BJ (cell line): ENCODE measurements at regions of chr19 and their contacts with region 1.

Region 1: DNA sequence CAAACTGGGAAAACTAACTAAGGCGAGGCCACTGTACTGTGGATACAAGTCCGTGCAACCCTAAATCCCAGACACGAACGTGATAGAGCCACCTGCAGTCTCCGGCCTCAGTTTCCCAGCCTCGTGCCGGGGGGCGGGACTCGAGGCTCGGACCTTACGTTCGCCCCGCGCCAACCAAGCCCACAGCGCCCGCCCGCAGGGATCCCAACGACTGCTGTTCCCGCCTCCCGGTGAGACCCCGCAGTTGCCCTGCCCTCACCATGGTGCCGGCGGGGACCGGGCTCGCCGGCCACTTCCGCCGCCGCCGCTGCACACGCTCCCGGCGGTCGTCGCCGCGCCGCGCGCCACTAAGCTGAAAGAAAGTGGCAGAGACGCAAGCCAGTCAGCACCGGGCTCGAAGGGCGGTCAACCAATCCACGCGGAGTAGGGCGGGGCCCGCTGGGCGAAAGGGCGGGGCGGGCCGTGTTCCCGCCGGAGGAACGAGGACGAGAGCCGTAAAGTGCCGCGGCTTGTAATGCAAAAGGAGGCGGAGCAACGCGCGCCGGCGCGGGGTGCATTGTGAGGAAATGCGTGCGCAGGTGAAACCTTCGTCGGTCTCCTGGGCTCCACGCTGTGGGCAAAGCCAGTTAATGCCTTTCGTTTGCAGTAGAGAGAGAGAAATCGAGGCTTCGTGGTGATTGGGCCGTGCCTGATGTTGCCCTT is at the start of gene LSM4:
- DNase-seq: peak; percentile 71
- H3K4me3 ChIP-seq: peak within 1 kb of the TSS; percentile 74
- H3K27me3 ChIP-seq: no peaks in the 10 kb centered on the region
- CTCF ChIP-seq: peak; percentile 22; the same call in 1 of the 2 replicates
- polyA plus RNA-seq, gene LSM4: 94.7 and 99.8 TPM in 2 replicates

Region 2: GRCh38 chr19:18233224-18233825 is 89.6 kb before region 1 on chr19:
- CTCF ChIA-PET with region 1: no interaction called
- POLR2A ChIA-PET with region 1: no interaction called
- DNase-seq: no peak
- H3K4me3 ChIP-seq: no peak overlapping the region
- H3K27me3 ChIP-seq: peaks cover 6% of the 10 kb centered on the region
- CTCF ChIP-seq: no peak

Region 3: DNA sequence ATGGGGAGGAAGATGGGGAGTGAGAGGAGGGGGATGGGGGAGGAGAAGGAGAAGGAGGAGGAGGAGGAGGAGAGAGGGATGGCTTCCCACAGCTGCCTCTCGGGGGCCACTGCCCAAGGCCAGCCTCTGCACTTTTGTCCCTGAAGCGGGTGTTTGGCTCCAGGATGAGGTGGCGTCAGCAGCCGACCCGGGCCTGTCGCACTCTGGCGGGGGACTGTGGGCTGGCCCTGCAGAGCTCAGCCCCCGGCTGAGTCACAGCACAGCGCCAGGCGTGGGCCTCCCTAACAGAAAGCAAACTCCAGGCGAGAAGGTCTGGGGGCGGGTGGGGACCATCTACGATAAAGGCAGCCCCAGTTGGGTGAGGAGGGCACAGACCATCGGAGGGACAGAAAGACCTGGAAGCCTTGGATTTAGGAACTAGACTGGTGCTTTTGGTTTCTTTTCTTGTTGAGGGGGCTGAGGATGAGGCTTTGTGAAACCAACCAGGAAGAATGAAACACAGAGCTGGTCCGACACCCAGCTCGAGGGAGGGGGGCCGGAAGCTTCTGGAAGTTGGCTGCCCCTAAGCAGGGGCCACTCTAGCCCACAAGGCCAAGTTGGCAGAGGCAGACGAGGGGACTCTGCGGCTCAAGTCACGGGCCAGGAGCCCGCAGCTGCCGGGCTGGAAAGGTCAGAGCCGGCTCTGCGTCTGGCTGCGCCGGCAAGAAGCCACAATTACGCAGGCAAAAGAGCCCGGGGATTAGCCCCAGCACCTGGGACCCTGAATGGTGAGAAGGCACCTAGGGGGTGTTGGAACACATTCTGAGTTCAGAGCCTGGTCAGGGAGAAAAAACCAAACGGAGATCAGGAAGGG is 18.2 kb before region 1 on chr19:
- CTCF ChIA-PET with region 1: interaction called, 10 read pairs
- POLR2A ChIA-PET with region 1: interaction called, 6 read pairs
- DNase-seq: no peak
- H3K4me3 ChIP-seq: peak overlapping the region; percentile 27
- H3K27me3 ChIP-seq: no peaks in the 10 kb centered on the region
- CTCF ChIP-seq: 0 out of 2 replicates have a peak, but pooled peaks have one; percentile 12